ENCODE measurements at regions of chr18 and their contacts with region 1.

Region 1: GRCh38 chr18:56200381-56200911 is 437.9 kb downstream of the TXNL1 start:
- DNase-seq: peak; percentile 93
- H3K4me3 ChIP-seq: no peak overlapping the region
- H3K27ac ChIP-seq: peak overlapping the region; percentile 98
- H3K4me1 ChIP-seq: peaks cover 66% of the 10 kb centered on the region
- H3K27me3 ChIP-seq: no peaks in the 10 kb centered on the region
- CTCF ChIP-seq: no peak
- POLR2A ChIP-seq: no peak

Region 2: DNA sequence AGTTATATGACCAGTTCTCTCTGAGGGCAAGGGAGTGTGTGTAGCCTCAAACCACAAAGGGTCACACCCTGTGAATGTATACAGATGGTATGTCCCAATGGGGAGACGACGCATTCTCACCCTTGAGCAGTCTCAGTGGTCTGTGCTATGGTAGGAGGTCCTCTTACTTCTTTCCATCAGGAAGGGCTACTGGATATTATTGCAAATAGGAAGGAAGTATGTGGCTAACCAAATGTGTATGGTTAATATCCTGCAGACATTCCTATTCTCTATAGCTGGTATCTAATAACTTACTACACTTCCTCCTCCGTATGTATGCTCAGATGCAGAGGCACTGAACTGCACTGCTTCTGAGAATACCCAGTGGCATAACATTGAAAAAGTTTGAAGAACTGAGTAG is 934.5 kb before region 1 on chr18:
- CTCF ChIA-PET with region 1: no interaction called
- POLR2A ChIA-PET with region 1: no interaction called
- dilution Hi-C with region 1: no loop called
- intact Hi-C with region 1: loop called (anchors 5 kb)
- DNase-seq: peak; percentile 75
- H3K4me3 ChIP-seq: no peak overlapping the region
- H3K27ac ChIP-seq: peak overlapping the region; percentile 73
- H3K4me1 ChIP-seq: peaks cover 67% of the 10 kb centered on the region
- H3K27me3 ChIP-seq: no peaks in the 10 kb centered on the region
- CTCF ChIP-seq: no peak
- POLR2A ChIP-seq: peak; percentile 30

Region 3: DNA sequence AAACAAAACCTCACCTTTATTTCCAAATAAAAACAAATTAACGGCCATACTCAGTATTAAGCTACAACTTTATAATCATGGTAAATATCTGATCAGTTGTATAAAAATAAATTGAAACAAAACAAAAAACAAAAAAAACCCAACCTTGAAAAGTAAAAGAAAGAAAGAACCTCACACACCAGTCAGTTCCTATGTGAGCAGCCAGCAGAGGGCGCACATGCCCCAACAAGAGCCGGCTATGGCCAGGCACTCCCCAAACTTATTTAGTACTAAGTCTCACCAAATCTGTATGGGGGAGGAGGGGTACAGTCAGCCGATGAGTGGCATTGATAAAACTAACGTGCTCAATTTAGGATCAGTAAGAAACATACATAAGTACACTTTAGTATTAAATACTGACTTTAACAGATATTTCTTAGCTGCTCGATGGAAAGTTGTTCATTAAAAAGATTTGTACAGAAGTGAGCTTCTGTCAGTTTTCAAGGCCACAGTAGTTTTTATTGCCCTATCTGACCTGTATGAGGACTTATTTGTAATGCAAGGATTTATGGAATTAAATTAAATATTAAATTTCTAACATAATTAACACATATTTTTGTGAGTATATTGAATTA is 785.1 kb before region 1 on chr18:
- CTCF ChIA-PET with region 1: no interaction called
- POLR2A ChIA-PET with region 1: no interaction called
- dilution Hi-C with region 1: no loop called
- intact Hi-C with region 1: loop called (anchors 1 kb)
- DNase-seq: peak; percentile 90
- H3K4me3 ChIP-seq: no peak overlapping the region
- H3K27ac ChIP-seq: peak overlapping the region; percentile 13
- H3K4me1 ChIP-seq: peaks cover 45% of the 10 kb centered on the region
- H3K27me3 ChIP-seq: no peaks in the 10 kb centered on the region
- CTCF ChIP-seq: peak; percentile 79 to 91
- POLR2A ChIP-seq: no peak

Region 4: DNA sequence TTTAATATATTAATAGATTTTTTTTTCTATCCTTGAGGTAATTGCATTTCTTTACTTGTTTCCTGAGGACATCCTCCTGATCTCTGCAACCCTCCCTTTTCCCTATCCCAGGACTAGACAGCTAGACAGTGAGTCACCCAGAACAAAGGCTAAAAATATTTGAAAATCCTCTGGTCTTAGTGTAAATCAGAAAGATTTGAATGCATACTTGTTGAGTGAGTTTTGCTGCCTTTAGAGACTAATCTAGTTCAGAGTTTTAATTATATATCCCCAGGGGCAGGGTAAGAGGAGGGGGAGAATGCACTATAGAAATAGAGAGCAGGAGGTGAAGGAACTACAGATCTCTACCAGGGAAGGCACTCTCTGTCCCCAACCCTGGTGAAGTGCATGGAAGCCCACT is 410.1 kb before region 1 on chr18:
- CTCF ChIA-PET with region 1: no interaction called
- POLR2A ChIA-PET with region 1: no interaction called
- dilution Hi-C with region 1: no loop called
- intact Hi-C with region 1: loop called (anchors 1 kb)
- DNase-seq: peak; percentile 84
- H3K4me3 ChIP-seq: no peak overlapping the region
- H3K27ac ChIP-seq: peak overlapping the region; percentile 81
- H3K4me1 ChIP-seq: peaks cover 19% of the 10 kb centered on the region
- H3K27me3 ChIP-seq: no peaks in the 10 kb centered on the region
- CTCF ChIP-seq: no peak
- POLR2A ChIP-seq: no peak

Region 5: DNA sequence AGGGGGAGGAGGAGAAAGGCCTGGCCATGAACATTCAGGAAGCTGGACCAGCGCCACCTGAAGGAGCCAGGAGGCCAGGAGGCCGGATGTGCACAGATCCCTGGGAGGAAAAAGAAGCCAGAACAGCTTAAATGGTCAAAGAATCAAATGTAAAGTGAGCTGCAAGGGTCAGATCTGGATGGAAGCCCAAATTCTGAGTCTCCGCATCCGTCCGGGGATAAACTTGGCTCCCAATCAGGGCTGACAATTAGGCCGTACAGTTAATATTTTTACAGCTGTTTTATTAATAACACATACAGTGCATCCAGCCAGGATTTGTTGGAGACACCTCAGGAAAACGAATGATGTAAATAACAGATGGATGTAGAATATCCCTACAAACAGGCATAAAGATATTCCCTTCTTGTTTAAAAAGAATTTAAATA is 117.3 kb before region 1 on chr18:
- CTCF ChIA-PET with region 1: interaction called, 8 read pairs
- POLR2A ChIA-PET with region 1: no interaction called
- dilution Hi-C with region 1: no loop called
- intact Hi-C with region 1: loop called (anchors 1 kb)
- DNase-seq: peak; percentile 99
- H3K4me3 ChIP-seq: no peak overlapping the region
- H3K27ac ChIP-seq: peak overlapping the region; percentile 95
- H3K4me1 ChIP-seq: peaks cover 26% of the 10 kb centered on the region
- H3K27me3 ChIP-seq: no peaks in the 10 kb centered on the region
- CTCF ChIP-seq: peak; percentile 24 to 46
- POLR2A ChIP-seq: peak; percentile 71

Region 6: DNA sequence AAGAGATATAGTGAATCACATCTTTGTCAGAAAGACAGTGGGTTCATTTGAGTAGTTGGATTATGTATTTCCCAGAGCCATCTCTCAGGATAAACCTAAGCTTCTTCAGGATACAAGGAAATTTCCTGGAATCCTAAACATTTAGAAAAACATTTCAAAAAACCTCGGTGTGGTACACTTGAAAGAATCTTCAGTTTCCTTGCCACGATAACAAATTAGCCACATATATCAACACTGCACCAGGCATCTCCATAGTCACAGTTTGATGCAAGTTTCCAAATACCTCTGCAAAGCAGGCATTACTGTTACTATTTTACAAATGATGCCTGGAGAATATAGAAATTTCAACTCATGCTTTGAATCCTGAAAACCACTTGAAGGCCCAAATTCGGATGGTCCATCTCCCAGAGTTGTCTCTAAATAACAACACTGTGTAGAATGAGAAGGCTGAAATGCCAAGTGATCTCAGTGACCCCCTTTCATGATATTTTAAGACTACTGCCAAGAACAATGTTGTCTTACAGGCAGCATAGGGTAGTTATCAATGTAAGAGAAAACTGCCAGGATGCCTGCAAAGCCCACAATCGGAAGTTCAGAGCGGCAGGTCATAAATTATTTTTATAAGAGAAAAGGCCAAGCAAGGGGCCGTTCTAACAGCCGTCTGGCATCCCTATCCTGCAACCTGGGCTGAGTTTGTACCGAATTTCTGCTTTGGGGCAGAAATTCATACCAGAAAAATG is 130.1 kb after region 1 on chr18:
- CTCF ChIA-PET with region 1: no interaction called
- POLR2A ChIA-PET with region 1: no interaction called
- dilution Hi-C with region 1: no loop called
- intact Hi-C with region 1: loop called (anchors 1 kb)
- DNase-seq: peak; percentile 93
- H3K4me3 ChIP-seq: no peak overlapping the region
- H3K27ac ChIP-seq: no peak overlapping the region
- H3K4me1 ChIP-seq: peaks cover 17% of the 10 kb centered on the region
- H3K27me3 ChIP-seq: no peaks in the 10 kb centered on the region
- CTCF ChIP-seq: no peak
- POLR2A ChIP-seq: no peak

Region 7: GRCh38 chr18:56575819-56576663 is 375.6 kb after region 1 on chr18:
- CTCF ChIA-PET with region 1: interaction called, 5 read pairs
- POLR2A ChIA-PET with region 1: no interaction called
- dilution Hi-C with region 1: no loop called
- intact Hi-C with region 1: loop called (anchors 1 kb)
- DNase-seq: peak; percentile 82
- H3K4me3 ChIP-seq: no peak overlapping the region
- H3K27ac ChIP-seq: no peak overlapping the region
- H3K4me1 ChIP-seq: peaks cover 25% of the 10 kb centered on the region
- H3K27me3 ChIP-seq: no peaks in the 10 kb centered on the region
- CTCF ChIP-seq: peak; percentile 29 to 33
- POLR2A ChIP-seq: no peak